MCF 10A (cell line): ENCODE measurements at regions of chr20 and their contacts with region 1.

Region 1: DNA sequence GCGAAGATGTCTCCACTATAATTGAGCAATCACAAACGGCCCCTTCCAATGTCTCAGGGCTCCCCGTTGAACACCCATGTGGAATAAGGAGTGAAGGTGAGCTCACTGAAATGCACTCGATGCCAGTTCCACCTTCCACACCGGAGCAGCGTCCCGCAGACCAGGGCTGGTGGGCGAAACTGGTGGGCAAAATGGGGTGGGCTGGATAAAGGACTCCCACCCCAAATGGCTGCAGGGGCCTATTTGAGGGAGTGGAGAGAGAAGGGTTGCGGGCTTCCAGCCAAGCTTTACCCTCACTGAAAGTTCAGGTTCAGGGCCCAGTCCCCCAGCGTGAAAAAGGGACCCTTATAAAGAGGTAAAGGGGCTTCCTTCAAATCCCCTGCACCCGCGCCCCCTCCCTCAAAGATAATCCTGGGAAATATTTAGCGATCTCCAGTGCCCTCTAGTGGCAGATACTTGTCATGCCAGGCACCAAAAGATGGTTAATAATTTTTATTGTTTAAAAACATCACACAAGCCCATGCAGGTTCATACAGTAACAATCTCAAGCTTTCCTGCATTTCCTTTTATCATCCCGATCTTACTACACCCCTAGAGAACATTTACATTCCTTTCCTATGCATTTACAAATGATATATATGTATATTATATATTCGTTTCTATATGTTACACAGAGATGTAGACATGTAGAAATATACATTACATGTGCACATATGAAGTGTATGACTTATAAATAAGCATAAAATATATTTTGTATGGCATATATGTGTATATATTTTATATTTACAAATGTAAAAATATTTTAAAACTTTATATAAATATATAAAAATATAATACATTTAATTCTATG is 58.2 kb upstream of the NKX2-2 start:
- DNase-seq: peak; percentile 28
- H3K4me3 Mint-ChIP-seq: no peak overlapping the region
- H3K27ac Mint-ChIP-seq: no peak overlapping the region
- H3K4me1 Mint-ChIP-seq: no peaks in the 10 kb centered on the region
- H3K27me3 Mint-ChIP-seq: peaks cover 34% of the 10 kb centered on the region
- CTCF ChIP-seq: peak; percentile 90

Region 2: GRCh38 chr20:20837574-20838021 is 734.5 kb before region 1 on chr20:
- CTCF ChIA-PET with region 1: interaction called, 49 read pairs
- POLR2A ChIA-PET with region 1: no interaction called
- intact Hi-C with region 1: loop called (anchors 1 kb)
- DNase-seq: peak; percentile 50
- H3K4me3 Mint-ChIP-seq: no peak overlapping the region
- H3K27ac Mint-ChIP-seq: no peak overlapping the region
- H3K4me1 Mint-ChIP-seq: no peaks in the 10 kb centered on the region
- H3K27me3 Mint-ChIP-seq: peaks cover 17% of the 10 kb centered on the region
- CTCF ChIP-seq: peak; percentile 79

Region 3: DNA sequence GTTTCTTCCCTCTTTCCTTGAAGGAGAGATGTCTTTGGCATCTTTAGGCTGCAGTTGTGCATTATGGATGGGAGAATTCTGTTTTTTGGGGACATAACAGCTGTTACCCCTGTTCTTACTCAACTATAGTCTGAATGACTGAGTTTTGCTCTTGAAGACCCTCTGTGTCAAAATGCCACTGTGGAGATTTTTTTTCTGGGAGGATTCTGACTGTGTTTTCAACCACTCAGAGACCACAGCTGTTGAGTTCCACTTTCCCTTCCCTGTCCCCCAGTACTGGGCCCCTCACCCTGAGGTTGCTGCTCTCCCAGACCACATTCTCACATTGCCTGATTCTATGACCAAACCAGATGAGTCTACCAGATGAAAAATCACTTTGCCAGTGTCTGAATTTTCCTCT is 106.3 kb before region 1 on chr20:
- CTCF ChIA-PET with region 1: no interaction called
- POLR2A ChIA-PET with region 1: no interaction called
- intact Hi-C with region 1: no loop called
- DNase-seq: no peak
- H3K4me3 Mint-ChIP-seq: no peak overlapping the region
- H3K27ac Mint-ChIP-seq: no peak overlapping the region
- H3K4me1 Mint-ChIP-seq: no peaks in the 10 kb centered on the region
- H3K27me3 Mint-ChIP-seq: no peaks in the 10 kb centered on the region
- CTCF ChIP-seq: no peak

Region 4: DNA sequence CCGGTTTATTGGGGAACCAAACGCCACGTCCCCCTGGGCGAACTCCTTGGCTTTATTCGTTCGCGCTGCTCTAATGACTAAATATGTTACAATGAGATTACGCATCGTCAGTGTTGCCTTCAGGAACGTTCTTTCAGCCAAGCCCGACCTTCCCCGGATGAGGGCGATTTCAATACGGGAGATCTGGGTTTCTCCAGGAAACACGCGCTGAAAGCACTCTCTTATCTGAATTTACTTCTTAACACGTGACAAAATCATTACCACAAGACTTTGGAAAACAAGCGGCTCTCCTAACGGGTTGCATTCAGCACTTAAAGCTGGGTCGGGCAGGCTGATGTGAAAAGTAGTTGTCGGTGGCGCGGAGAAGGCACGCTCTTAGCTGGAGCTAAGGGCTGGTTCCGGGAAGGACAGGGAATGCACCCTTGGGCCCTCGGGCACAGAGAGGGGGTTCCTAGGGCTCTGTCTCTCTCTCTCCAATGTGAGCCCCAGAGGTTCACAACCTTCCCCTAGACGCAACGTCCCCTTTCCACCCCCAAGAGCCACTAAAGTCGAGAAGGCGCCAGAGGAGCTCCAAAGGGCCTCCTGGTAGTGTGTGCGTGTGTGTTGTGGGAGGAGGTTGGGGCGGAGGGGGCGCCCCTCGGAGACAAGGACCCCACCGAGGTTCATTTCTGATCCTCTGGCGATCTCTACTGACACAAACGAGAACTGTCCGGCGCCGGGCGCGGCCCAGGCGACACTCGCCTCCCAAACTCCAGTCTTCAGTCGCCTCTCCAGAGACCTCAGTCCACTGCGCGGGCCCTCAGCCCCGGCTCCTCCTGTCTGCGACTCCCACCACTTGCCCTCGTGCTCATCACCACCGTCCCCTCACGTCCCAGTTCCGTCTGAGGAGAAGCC is 51.1 kb before region 1 on chr20:
- CTCF ChIA-PET with region 1: interaction called, 14 read pairs
- POLR2A ChIA-PET with region 1: no interaction called
- intact Hi-C with region 1: no loop called
- DNase-seq: no peak
- H3K4me3 Mint-ChIP-seq: no peak overlapping the region
- H3K27ac Mint-ChIP-seq: no peak overlapping the region
- H3K4me1 Mint-ChIP-seq: peaks cover 3% of the 10 kb centered on the region
- H3K27me3 Mint-ChIP-seq: peaks cover 88% of the 10 kb centered on the region
- CTCF ChIP-seq: no peak

Region 5: DNA sequence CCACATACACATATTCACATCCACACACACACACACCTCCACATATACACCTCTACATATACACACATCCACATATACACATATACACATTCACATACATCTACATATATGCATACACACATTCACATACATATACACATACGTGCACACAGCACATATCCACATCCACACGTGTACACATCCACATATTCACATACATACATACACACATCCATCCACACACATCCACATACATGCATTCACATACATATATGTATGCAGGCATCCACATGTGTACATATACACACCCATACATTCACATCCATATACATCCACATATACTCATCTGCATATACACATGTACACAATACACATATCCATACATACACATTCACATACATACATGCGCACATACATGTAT is 32.6 kb before region 1 on chr20:
- CTCF ChIA-PET with region 1: interaction called, 20 read pairs
- POLR2A ChIA-PET with region 1: interaction called, 3 read pairs
- intact Hi-C with region 1: no loop called
- DNase-seq: no peak
- H3K4me3 Mint-ChIP-seq: no peak overlapping the region
- H3K27ac Mint-ChIP-seq: no peak overlapping the region
- H3K4me1 Mint-ChIP-seq: no peaks in the 10 kb centered on the region
- H3K27me3 Mint-ChIP-seq: peaks cover 8% of the 10 kb centered on the region
- CTCF ChIP-seq: no peak

Region 6: DNA sequence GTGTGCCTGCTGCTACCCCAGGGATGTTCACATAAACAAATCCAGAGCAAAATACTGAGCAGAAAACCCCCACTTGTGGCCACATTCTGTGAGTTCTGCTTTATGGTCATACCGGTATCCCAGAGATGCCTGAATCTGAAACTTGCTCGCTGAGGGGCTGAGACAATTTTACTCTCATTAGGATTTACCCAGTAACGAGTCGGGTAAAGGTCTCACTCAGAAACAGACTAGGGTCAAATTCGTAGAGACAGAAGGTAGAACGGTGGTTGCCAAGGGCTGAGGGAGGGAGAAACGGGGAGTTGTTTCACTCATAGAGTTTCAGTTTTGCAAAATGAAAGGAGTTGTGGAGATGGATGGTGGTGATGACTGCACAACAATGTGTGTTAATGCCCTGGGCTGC is 12.8 kb before region 1 on chr20:
- CTCF ChIA-PET with region 1: interaction called, 99 read pairs
- POLR2A ChIA-PET with region 1: no interaction called
- intact Hi-C with region 1: no loop called
- DNase-seq: no peak
- H3K4me3 Mint-ChIP-seq: no peak overlapping the region
- H3K27ac Mint-ChIP-seq: no peak overlapping the region
- H3K4me1 Mint-ChIP-seq: peaks cover 4% of the 10 kb centered on the region
- H3K27me3 Mint-ChIP-seq: peaks cover 52% of the 10 kb centered on the region
- CTCF ChIP-seq: no peak

Region 7: DNA sequence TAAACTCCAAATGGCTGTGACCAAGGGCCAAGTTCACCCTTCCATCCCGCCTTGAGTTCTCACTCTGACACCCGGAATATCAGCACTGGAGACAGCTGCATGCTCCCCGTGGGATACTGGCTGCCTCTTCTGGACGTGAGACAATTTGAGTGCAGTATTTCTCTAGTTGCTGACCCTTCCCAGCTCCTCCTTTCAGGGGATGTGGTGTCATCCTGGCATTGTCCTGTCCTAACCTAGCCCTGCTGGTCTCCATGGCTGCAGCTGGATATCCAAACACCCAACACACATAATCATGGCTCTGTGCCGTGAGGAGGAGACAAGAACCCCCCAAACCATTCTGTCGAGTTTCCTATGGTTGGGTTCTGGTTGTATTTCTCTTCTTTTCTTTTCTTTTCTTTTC is 216.0 kb after region 1 on chr20:
- CTCF ChIA-PET with region 1: no interaction called
- POLR2A ChIA-PET with region 1: no interaction called
- intact Hi-C with region 1: no loop called
- DNase-seq: no peak
- H3K4me3 Mint-ChIP-seq: no peak overlapping the region
- H3K27ac Mint-ChIP-seq: no peak overlapping the region
- H3K4me1 Mint-ChIP-seq: no peaks in the 10 kb centered on the region
- H3K27me3 Mint-ChIP-seq: peaks cover 27% of the 10 kb centered on the region
- CTCF ChIP-seq: no peak